ENCODE measurements at regions of chr5 and their contacts with region 1.

Region 1: DNA sequence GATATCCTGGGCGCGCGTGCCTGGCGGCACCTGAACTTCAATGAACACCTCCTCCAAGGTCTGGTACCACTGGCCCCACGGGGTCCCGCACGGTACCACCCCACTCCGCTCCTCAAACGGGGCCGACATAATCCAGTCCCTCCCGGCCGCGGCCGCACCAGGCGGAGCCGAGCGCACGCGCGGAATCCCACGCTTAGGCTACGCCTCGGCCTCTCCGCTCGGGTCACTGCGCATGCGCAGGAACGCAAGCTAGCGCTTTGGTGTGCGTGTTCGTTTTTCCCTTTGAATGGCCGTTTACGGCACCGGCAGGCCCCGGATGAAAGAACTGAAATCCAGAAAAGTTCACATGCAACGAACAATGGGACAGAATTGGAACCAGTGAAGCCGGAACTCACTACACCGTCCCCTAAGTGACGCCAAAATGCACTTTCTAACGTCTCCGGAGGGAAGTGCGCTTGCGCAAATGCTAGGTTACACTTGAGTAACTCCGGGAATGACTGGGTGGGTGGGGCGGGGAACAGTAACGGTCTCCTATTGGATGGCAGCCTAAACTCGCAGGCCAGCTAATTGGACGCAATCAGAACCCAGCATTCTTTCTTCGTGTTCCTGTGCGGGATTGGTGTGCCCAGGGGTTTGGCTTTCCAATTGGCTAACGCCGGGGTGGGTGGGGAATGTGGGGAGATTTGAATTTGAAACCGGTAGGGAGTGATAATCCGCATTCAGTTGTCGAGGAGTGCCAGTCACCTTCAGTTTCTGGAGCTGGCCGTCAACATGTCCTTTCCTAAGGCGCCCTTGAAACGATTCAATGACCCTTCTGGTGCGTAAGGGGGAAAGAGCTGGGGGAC is at the starts of genes HMMR and NUDCD2:
- DNase-seq: peak; percentile 96
- H3K4me3 Mint-ChIP-seq: peak within 1 kb of the TSS; percentile 91
- H3K27ac Mint-ChIP-seq: peak within 1 kb of the TSS; percentile 99
- H3K4me1 Mint-ChIP-seq: peaks cover 55% of the 10 kb centered on the region
- H3K27me3 Mint-ChIP-seq: no peaks in the 10 kb centered on the region
- total RNA-seq, gene HMMR: 69.4 to 77.8 TPM
- total RNA-seq, gene NUDCD2: 29.9 to 33.1 TPM

Region 2: GRCh38 chr5:163439092-163439425 is 21.1 kb before region 1 on chr5:
- CTCF ChIA-PET with region 1: interaction called, 28 read pairs
- POLR2A ChIA-PET with region 1: interaction called, 6 read pairs
- DNase-seq: no peak
- H3K4me3 Mint-ChIP-seq: peak overlapping the region; percentile 91
- H3K27ac Mint-ChIP-seq: peak overlapping the region; percentile 92
- H3K4me1 Mint-ChIP-seq: peaks cover 46% of the 10 kb centered on the region
- H3K27me3 Mint-ChIP-seq: peaks cover 4% of the 10 kb centered on the region

Region 3: DNA sequence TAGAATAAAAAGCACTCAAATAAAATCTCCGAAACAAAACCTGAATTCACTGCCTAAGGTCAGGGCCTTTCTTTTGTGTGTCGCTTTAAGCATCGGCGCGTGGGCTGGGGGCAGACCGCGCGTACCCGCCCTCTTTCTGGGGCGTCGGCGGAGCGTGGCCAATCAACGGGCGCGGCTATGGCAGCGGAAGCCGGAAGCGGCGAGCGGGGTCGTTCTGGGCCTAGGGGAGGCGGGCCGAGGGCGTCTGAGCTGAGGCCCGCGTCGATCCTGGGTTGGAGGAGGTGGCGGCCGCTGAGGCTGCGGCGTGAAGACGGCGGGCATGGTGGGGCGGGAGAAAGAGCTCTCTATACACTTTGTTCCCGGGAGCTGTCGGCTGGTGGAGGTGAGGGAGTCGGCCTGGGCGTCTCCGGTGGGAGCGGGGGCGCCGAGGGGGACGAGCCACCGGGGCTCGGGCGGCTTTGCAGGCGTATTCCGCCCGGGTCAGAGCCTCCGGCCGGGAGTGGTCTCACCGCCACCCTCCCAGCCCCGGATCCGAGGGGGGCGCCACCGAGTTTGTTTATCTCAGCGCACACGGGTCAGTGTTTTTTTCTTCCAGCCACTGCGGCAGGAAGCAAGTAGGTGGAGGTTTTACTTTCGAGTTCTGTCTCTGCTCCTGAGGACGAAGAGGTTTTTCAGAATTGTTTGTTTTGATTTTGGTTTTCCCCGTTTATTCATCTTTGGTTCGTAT is 45.4 kb after region 1 on chr5 and contains the start of gene MAT2B:
- CTCF ChIA-PET with region 1: interaction called, 12 read pairs
- POLR2A ChIA-PET with region 1: interaction called, 23 read pairs
- DNase-seq: peak; percentile 95
- H3K4me3 Mint-ChIP-seq: peak within 1 kb of the TSS; percentile 88
- H3K27ac Mint-ChIP-seq: peak within 1 kb of the TSS; percentile 96
- H3K4me1 Mint-ChIP-seq: peaks cover 42% of the 10 kb centered on the region
- H3K27me3 Mint-ChIP-seq: no peaks in the 10 kb centered on the region
- total RNA-seq, gene MAT2B: 91.4 to 94.4 TPM